Posterior vena cava (tissue), 2 donors: ENCODE measurements at regions of chr3 and their contacts with region 1.

Region 1: GRCh38 chr3:21621181-21621651 is 129.8 kb downstream of the ZNF385D start:
- DNase-seq: no peak

Region 2: DNA sequence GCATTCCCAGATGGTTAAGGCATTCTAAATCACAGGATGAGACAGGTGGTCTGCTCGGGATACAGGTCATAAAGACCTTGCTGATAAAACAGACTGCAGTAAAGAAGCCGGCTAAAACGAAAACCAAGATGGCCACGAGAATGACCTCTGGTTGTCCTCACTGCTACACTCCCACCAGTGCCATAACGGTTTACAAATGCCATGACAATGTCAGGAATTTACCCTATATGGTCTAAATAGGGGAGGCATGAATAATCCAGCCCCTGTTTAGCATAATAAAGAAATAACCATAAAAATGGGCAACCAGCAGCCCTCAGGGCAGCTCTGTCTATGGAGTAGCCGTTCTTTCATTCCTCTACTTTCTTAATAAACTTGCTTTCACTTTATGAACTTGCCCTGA is 21.3 kb before region 1 on chr3:
- intact Hi-C with region 1: loop called in 1 of 2 experiments (anchors 1 kb)
- DNase-seq: no peak